BJ (cell line): ENCODE measurements at regions of chr7 and their contacts with region 1.

Region 1: GRCh38 chr7:124784879-124785818 is 19.6 kb upstream of the GPR37 start:
- DNase-seq: peak; percentile 6
- H3K4me3 ChIP-seq: no peak overlapping the region
- H3K27me3 ChIP-seq: no peaks in the 10 kb centered on the region
- CTCF ChIP-seq: peak; percentile 86

Region 2: GRCh38 chr7:124152859-124153692 is 632.1 kb before region 1 on chr7:
- CTCF ChIA-PET with region 1: interaction called, 14 read pairs
- POLR2A ChIA-PET with region 1: no interaction called
- DNase-seq: no peak
- H3K4me3 ChIP-seq: no peak overlapping the region
- H3K27me3 ChIP-seq: no peaks in the 10 kb centered on the region
- CTCF ChIP-seq: peak; percentile 23; the same call in 1 of the 2 replicates

Region 3: DNA sequence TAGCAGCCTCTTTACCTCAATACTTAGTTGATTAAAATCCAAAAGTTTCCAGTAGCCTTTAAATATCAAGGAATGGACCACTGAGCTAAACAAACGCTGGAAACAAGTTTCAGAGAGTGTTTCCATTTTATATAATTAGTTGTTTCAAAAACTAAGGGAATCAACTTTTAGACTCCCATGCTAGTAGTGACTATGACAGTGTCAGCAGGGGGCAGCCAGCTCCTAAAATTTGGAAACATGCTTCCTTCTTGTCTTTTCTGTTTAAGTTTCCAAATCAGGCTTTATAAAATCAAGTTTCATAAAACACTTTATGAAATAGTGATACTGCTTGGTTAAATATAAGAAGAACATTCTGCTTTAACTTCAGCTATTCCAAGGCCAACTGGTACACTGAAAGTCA is 614.1 kb before region 1 on chr7:
- CTCF ChIA-PET with region 1: interaction called, 11 read pairs
- POLR2A ChIA-PET with region 1: no interaction called
- DNase-seq: no peak
- H3K4me3 ChIP-seq: no peak overlapping the region
- H3K27me3 ChIP-seq: no peaks in the 10 kb centered on the region
- CTCF ChIP-seq: peak; percentile 44

Region 4: GRCh38 chr7:124765401-124766352 is 19.5 kb before region 1 on chr7 and contains the start of gene GPR37:
- CTCF ChIA-PET with region 1: interaction called, 16 read pairs
- POLR2A ChIA-PET with region 1: no interaction called
- DNase-seq: no peak
- H3K4me3 ChIP-seq: peak within 1 kb of the TSS; percentile 52
- H3K27me3 ChIP-seq: peaks cover 8% of the 10 kb centered on the region
- CTCF ChIP-seq: peak; percentile 48
- polyA plus RNA-seq, gene GPR37: 0.25 and 0.33 TPM in 2 replicates